Adrenal gland (tissue), 19 donors: ENCODE measurements at regions of chr3 and their contacts with region 1.

Region 1: DNA sequence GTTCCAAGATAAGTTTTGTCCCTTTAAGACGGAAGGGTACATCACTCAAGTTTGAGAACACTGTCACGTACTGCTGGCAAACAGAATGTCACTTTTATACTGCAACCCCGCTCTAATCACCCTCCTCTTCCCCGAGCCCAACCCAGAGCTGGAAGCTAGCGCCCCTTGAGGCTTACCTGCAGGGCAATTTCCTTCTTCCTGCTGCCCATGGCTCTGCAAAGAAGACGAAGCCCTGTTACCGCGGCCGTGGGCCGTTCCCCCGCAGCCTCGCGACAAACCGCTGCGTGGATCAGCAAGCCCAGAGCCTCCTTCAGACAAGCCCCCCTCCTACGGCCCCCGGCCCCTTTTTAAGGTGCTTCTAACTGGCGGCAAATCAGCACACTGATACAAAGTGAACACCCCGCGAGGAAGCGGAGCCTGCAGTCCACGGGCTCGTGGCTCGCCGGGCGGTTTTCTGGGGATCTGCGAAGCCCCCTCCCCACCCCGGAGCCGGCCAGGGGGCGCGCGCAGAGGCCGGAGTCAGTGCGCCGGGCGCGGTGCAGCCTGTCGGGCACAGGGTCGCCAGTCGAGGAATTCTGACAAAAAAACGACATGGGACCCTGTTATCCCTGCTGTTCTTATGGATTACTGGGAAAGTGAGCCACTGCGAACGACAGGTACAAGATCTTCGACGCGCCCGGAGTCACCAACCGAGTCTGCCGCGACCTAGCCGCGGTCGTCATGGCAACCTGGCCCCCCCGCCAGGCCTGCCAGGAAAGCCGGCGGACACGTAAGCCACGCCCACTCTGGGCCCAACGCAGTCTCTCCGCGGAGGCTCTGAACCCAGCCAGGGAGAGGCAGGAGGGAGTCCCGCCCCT is at the start of gene NME9:
- DNase-seq: peak; percentile 93 to 97 (median 94)
- H3K4me3 ChIP-seq: peak within 1 kb of the TSS in 3 of 4 donors; percentile 15 to 64 (median 47)
- H3K27ac ChIP-seq: peak within 1 kb of the TSS in 4 of 5 donors; percentile 29 to 66 (median 57)
- H3K4me1 ChIP-seq: peaks cover 0 to 6% of the 10 kb centered on the region in 2 donors
- H3K27me3 ChIP-seq: no peaks in the 10 kb centered on the region
- CTCF ChIP-seq: peak; percentile 37 to 59 (median 48)
- POLR2A ChIP-seq: peak in 1 of 2 donors; percentile 8
- total RNA-seq, gene NME9: 0.46 to 1.9 (median 0.79) TPM in 4 of 9 donors, not detected in the others

Region 2: GRCh38 chr3:138186803-138187295 is 142.5 kb before region 1 on chr3:
- intact Hi-C with region 1: loop called in 1 of 2 experiments (anchors 10 kb)
- DNase-seq: peak; percentile 89 to 95 (median 91)
- H3K4me3 ChIP-seq: peak overlapping the region in 3 of 4 donors; percentile 92 to 100 (median 93)
- H3K27ac ChIP-seq: peak overlapping the region; percentile 82 to 99 (median 95)
- H3K4me1 ChIP-seq: peaks cover 0 to 19% of the 10 kb centered on the region in 2 donors
- H3K27me3 ChIP-seq: peaks cover 10% of the 10 kb centered on the region
- CTCF ChIP-seq: no peak
- POLR2A ChIP-seq: no peak

Region 3: GRCh38 chr3:138417559-138417982 is 88.2 kb after region 1 on chr3:
- intact Hi-C with region 1: loop called in 1 of 2 experiments (anchors 5 kb)
- DNase-seq: peak; percentile 79 to 94 (median 84)
- H3K4me3 ChIP-seq: no peak overlapping the region
- H3K27ac ChIP-seq: no peak overlapping the region
- H3K4me1 ChIP-seq: peaks cover 8 to 12% of the 10 kb centered on the region in 2 donors
- H3K27me3 ChIP-seq: no peaks in the 10 kb centered on the region
- CTCF ChIP-seq: peak; percentile 82 to 92 (median 88)
- POLR2A ChIP-seq: no peak